BJ (cell line): ENCODE measurements at regions of chr15 and their contacts with region 1.

Region 1: DNA sequence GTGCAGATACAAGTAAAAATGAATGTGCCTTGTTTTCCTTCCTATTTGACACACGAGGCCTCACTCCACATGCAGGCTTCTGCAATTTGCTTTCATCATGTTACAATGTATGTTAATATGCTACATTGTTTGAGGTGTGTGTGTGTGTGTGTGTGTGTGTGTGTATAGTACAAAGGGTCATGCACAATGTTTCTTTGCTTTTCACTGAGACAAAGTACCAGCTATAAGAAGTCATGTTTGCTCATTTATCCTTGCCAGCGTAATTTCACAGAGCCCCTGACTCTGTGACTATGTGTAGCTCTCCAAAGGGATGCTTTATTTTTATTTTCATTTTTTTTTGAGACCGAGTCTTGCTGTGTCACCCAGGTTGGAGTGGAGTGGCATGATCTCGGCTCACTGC is 38.0 kb upstream of the NEDD4 start:
- DNase-seq: no peak
- H3K4me3 ChIP-seq: no peak overlapping the region
- H3K27me3 ChIP-seq: no peaks in the 10 kb centered on the region
- CTCF ChIP-seq: no peak

Region 2: DNA sequence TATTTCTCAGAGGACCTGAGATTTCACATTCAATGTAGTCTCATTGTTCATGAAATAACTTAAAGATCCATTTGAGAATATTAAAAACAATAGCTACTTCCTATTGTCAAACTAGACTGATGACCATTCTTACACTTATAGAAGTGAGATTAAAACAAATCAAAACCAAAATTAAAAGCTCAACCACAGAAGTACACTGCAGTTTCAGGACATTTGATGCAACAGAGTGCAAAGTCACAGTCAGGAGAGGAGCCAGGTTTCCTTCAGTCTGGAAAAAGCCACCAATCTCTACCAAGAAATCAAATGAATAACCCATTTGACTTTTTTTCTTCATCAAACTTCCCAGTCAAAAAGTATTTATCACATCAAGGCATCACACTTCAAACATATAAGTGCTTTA is 628.7 kb before region 1 on chr15:
- CTCF ChIA-PET with region 1: no interaction called
- POLR2A ChIA-PET with region 1: no interaction called
- DNase-seq: no peak
- H3K4me3 ChIP-seq: no peak overlapping the region
- H3K27me3 ChIP-seq: no peaks in the 10 kb centered on the region
- CTCF ChIP-seq: no peak

Region 3: DNA sequence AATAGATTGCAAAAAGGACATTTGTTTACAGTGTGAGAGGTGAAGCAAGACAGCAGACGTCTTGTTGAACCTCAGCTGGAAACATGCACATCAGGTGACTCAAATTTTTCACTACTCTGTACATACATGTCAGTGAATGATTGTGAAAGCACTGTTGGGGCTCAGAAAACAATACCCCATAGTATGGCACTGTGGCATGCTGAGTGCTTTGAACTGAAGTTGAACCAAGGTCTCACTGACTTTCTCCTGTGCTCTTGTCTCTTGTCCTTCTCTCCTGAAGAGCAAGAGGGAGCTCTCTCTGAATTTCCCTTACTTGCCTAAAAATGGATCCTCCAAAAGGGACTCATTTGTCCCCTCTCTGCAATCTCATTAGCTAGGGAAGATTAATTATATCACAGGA is 13.5 kb before region 1 on chr15:
- CTCF ChIA-PET with region 1: interaction called, 12 read pairs
- POLR2A ChIA-PET with region 1: no interaction called
- DNase-seq: no peak
- H3K4me3 ChIP-seq: no peak overlapping the region
- H3K27me3 ChIP-seq: no peaks in the 10 kb centered on the region
- CTCF ChIP-seq: peak; percentile 16; the same call in 1 of the 2 replicates